CD4-positive, alpha-beta memory T cell (primary cell): ENCODE measurements at regions of chr1 and their contacts with region 1.

Region 1: GRCh38 chr1:82388679-82389078 is 587.9 kb downstream of the ADGRL2 start:
- DNase-seq: no peak
- H3K4me3 ChIP-seq: no peak overlapping the region
- H3K4me3 Mint-ChIP-seq: no peak overlapping the region
- H3K27ac ChIP-seq: no peak overlapping the region
- H3K27ac Mint-ChIP-seq: no peak overlapping the region
- H3K4me1 ChIP-seq: no peaks in the 10 kb centered on the region
- H3K4me1 Mint-ChIP-seq: no peaks in the 10 kb centered on the region
- H3K27me3 ChIP-seq: no peaks in the 10 kb centered on the region
- H3K27me3 Mint-ChIP-seq: no peaks in the 10 kb centered on the region

Region 2: DNA sequence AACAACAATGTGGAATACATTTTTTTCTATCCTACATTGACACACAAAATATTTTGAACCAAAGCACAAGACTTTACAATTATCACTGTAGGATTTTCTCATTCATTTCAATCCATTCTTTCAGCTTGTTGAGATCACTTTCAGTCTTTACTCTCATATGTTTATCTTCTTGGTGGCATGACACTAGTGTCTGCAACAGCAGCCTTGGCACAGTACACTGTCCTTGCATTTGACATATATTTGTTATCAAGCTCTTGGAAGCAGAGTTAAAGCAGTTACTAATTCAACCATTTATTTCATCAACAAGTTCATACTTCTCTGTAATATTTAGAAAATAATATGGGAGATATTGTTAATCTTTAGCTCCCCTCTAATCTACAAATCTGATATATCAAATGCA is 1510.3 kb before region 1 on chr1:
- CTCF ChIA-PET with region 1: no interaction called
- POLR2A ChIA-PET with region 1: no interaction called
- intact Hi-C with region 1: loop called (anchors 10 kb)
- DNase-seq: no peak
- H3K4me3 ChIP-seq: no peak overlapping the region
- H3K4me3 Mint-ChIP-seq: no peak overlapping the region
- H3K27ac ChIP-seq: no peak overlapping the region
- H3K27ac Mint-ChIP-seq: no peak overlapping the region
- H3K4me1 ChIP-seq: no peaks in the 10 kb centered on the region
- H3K4me1 Mint-ChIP-seq: no peaks in the 10 kb centered on the region
- H3K27me3 ChIP-seq: no peaks in the 10 kb centered on the region
- H3K27me3 Mint-ChIP-seq: no peaks in the 10 kb centered on the region

Region 3: DNA sequence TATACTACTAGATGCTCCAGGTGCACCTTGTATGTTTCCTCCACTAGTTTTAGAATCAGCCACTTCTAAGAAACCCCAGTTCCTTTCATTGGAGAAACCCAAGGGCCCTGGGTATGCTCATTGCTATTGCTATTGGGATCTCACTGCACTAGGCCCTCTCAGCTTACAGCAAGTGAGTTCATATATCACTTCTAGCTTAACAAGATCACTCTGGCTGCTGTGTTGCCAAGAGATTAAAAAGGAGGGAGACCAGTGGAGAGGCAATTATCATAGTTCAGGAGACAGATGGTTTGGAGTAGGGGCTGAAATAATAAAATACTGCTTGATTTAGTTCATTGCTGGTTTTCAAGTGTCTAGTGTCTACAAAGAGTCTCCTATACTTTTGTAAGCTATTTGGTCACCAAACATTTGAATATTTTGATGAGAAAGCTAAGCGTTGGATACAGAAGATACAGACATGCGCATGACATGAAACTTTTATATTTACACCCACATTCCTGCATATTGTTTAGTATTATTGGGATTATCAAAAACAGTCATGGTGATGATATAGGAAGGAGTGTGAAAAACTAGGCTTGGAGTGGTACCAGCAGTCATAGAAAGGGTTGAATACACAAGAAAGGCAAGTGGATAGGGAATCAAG is 83.9 kb after region 1 on chr1:
- CTCF ChIA-PET with region 1: no interaction called
- POLR2A ChIA-PET with region 1: no interaction called
- intact Hi-C with region 1: no loop called
- DNase-seq: no peak
- H3K4me3 ChIP-seq: no peak overlapping the region
- H3K4me3 Mint-ChIP-seq: no peak overlapping the region
- H3K27ac ChIP-seq: no peak overlapping the region
- H3K27ac Mint-ChIP-seq: no peak overlapping the region
- H3K4me1 ChIP-seq: no peaks in the 10 kb centered on the region
- H3K4me1 Mint-ChIP-seq: no peaks in the 10 kb centered on the region
- H3K27me3 ChIP-seq: no peaks in the 10 kb centered on the region
- H3K27me3 Mint-ChIP-seq: no peaks in the 10 kb centered on the region